ENCODE measurements at regions of chr9 and their contacts with region 1.

Region 1: DNA sequence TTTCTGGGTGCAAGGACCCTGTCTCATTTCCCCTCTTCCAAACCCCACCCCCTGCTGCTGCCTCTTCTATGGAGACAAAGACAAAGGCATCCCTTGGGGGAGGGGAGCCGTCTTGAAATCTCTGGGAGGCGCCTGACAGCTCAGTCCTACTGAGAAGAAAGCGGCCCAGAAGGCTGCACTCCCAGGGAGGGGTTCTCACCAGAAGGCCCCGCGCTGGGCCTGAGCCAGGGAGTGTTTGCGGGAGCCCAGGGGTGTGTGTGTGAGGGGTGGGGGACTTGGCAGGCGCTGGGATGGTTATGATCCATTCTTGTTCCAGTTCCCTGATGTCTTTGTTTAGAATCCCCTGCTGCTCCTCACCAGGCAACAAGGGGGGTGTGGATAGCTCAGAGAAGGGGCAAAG is 45.7 kb upstream of the ALDH1B1 start:
- DNase-seq: no peak
- ATAC-seq: no peak

Region 2: GRCh38 chr9:38294220-38294960 is 52.4 kb before region 1 on chr9:
- intact Hi-C with region 1: loop called (anchors 10 kb)
- DNase-seq: no peak
- ATAC-seq: no peak

Measured in Right ventricle myocardium inferior (tissue), 1 donor.